ENCODE measurements at regions of chr7 and their contacts with region 1.

Region 1: GRCh38 chr7:7182156-7183060 is at the start of gene C1GALT1:
- DNase-seq: peak; percentile 98
- H3K4me3 ChIP-seq: peak within 1 kb of the TSS; percentile 65
- H3K4me3 Mint-ChIP-seq: peak within 1 kb of the TSS; percentile 91
- H3K27ac Mint-ChIP-seq: peak within 1 kb of the TSS; percentile 92
- H3K4me1 ChIP-seq: peaks cover 16% of the 10 kb centered on the region
- H3K4me1 Mint-ChIP-seq: peaks cover 16% of the 10 kb centered on the region
- H3K27me3 ChIP-seq: no peaks in the 10 kb centered on the region
- H3K27me3 Mint-ChIP-seq: no peaks in the 10 kb centered on the region
- CTCF ChIP-seq: peak; percentile 47 to 52
- total RNA-seq, gene C1GALT1: 49.8 and 52.2 TPM in 2 replicates

Region 2: DNA sequence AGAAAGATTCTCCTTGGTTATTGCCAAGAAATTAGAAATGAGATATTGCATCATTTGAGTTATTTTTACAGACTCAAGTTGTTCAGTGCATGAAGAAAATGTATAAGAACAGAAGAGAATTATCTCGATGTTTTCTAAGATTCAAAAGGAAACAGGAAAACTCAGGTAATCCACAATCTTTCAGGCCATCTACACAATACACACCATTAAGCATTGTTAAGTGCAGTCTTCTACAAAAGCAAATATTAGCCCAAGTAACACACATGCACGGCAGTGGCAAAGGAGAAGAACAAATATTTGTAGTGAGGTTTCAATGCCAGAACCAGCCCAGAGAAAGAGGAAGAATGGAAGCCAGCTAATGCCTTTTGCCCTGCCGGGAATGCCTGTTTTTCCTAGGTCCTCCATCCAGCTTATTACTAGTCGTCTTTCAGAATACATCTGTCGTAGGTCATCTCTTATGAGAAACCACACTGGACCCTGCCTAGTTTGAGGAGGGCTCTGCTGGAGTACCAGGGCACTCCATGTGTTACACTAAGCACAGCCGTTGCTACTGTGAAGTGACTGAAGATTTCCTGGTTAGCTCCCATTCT is 67.6 kb before region 1 on chr7:
- CTCF ChIA-PET with region 1: interaction called, 4 read pairs
- POLR2A ChIA-PET with region 1: interaction called, 6 read pairs
- intact Hi-C with region 1: loop called (anchors 1 kb)
- DNase-seq: peak; percentile 55 to 63
- H3K4me3 ChIP-seq: no peak overlapping the region
- H3K4me3 Mint-ChIP-seq: peak overlapping the region; percentile 23
- H3K27ac Mint-ChIP-seq: peak overlapping the region; percentile 6
- H3K4me1 ChIP-seq: peaks cover 64% of the 10 kb centered on the region
- H3K4me1 Mint-ChIP-seq: peaks cover 64% of the 10 kb centered on the region
- H3K27me3 ChIP-seq: no peaks in the 10 kb centered on the region
- H3K27me3 Mint-ChIP-seq: no peaks in the 10 kb centered on the region
- CTCF ChIP-seq: no peak

Region 3: GRCh38 chr7:7254908-7255307 is 72.5 kb after region 1 on chr7:
- CTCF ChIA-PET with region 1: no interaction called
- POLR2A ChIA-PET with region 1: interaction called, 6 read pairs
- intact Hi-C with region 1: loop called (anchors 1 kb)
- DNase-seq: peak; percentile 53 to 66
- H3K4me3 ChIP-seq: no peak overlapping the region
- H3K4me3 Mint-ChIP-seq: peak overlapping the region; percentile 10
- H3K27ac Mint-ChIP-seq: peak overlapping the region; percentile 84
- H3K4me1 ChIP-seq: peaks cover 13% of the 10 kb centered on the region
- H3K4me1 Mint-ChIP-seq: peaks cover 30% of the 10 kb centered on the region
- H3K27me3 ChIP-seq: no peaks in the 10 kb centered on the region
- H3K27me3 Mint-ChIP-seq: no peaks in the 10 kb centered on the region
- CTCF ChIP-seq: no peak

Region 4: GRCh38 chr7:7352845-7353244 is 170.4 kb after region 1 on chr7:
- CTCF ChIA-PET with region 1: no interaction called
- POLR2A ChIA-PET with region 1: no interaction called
- intact Hi-C with region 1: loop called (anchors 1 kb)
- DNase-seq: no peak
- H3K4me3 ChIP-seq: no peak overlapping the region
- H3K4me3 Mint-ChIP-seq: no peak overlapping the region
- H3K27ac Mint-ChIP-seq: no peak overlapping the region
- H3K4me1 ChIP-seq: peaks cover 12% of the 10 kb centered on the region; the same call in 1 of the 2 replicates
- H3K4me1 Mint-ChIP-seq: peaks cover 16% of the 10 kb centered on the region
- H3K27me3 ChIP-seq: no peaks in the 10 kb centered on the region
- H3K27me3 Mint-ChIP-seq: no peaks in the 10 kb centered on the region
- CTCF ChIP-seq: peak; percentile 15 to 20

Region 5: DNA sequence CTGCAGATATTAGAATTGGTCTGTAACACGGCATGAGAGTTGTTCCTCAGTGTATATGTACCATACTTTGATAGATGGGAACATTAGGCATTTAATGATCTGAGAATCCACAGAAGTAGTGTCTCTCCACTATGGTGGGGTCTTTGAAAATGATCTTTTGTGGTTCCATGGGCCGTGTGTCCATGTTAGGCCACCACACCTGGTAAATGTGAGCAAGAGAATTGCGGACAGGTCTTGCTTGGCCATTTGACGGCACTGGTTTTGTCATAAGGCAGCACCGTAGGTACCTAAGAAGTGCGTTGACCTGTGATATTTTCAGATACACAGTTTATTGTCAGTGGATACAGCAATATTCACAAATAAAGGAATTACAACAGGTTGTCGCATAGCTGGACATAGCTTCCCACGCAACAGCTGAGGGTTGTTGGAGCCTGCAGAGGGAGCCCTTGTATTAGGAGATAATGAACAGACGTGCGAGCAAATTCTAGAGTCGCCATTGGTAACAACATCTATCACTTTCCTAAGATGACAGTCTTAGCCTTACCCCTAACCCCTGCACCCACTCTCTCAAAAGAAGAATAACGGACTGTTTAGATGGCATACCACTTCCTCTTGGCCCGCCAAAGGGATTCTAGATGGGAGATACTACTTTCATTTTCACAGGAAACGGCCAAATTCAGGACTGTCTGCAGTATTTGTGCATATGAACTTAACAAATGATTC is 241.9 kb after region 1 on chr7:
- CTCF ChIA-PET with region 1: interaction called, 3 read pairs
- POLR2A ChIA-PET with region 1: no interaction called
- intact Hi-C with region 1: loop called (anchors 5 kb)
- DNase-seq: peak; percentile 62 to 75
- H3K4me3 ChIP-seq: no peak overlapping the region
- H3K4me3 Mint-ChIP-seq: no peak overlapping the region
- H3K27ac Mint-ChIP-seq: no peak overlapping the region
- H3K4me1 ChIP-seq: no peaks in the 10 kb centered on the region
- H3K4me1 Mint-ChIP-seq: no peaks in the 10 kb centered on the region
- H3K27me3 ChIP-seq: no peaks in the 10 kb centered on the region
- H3K27me3 Mint-ChIP-seq: no peaks in the 10 kb centered on the region
- CTCF ChIP-seq: peak; percentile 86 to 93

Region 6: GRCh38 chr7:7640221-7641128 is 458.1 kb after region 1 on chr7 and contains the start of gene UMAD1:
- CTCF ChIA-PET with region 1: interaction called, 3 read pairs
- POLR2A ChIA-PET with region 1: no interaction called
- intact Hi-C with region 1: loop called (anchors 1 kb)
- DNase-seq: peak; percentile 99 to 100
- H3K4me3 ChIP-seq: peak within 1 kb of the TSS; percentile 98
- H3K4me3 Mint-ChIP-seq: peak within 1 kb of the TSS; percentile 88
- H3K27ac Mint-ChIP-seq: peak within 1 kb of the TSS; percentile 97
- H3K4me1 ChIP-seq: peaks cover 15% of the 10 kb centered on the region
- H3K4me1 Mint-ChIP-seq: peaks cover 24% of the 10 kb centered on the region
- H3K27me3 ChIP-seq: no peaks in the 10 kb centered on the region
- H3K27me3 Mint-ChIP-seq: no peaks in the 10 kb centered on the region
- CTCF ChIP-seq: no peak
- total RNA-seq, gene UMAD1: 20.0 and 20.3 TPM in 2 replicates

Measured in Caco-2 (cell line).